Activated CD4-positive, alpha-beta memory T cell treated with anti-CD3 and anti-CD28 coated beads for 36 hours (primary cell): ENCODE measurements at regions of chr17 and their contacts with region 1.

Region 1: DNA sequence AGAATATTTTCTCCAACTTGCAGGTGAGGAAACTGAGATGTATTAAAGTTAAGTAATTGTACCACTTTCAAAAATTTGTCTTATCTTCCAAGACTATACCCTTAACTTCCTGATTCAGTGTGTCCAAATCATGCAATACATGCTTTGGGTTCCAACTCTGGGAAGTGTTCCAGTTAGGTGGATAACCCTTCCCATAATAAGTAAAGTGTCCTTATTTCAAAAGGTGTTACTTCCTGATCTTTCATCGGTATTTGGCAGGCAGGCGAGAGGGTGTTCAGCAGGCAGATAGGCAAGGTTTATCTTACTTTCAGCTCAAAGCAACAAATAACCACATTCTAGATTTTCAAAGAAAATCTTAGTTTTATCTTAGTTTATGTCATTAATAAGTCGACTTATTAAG is 46.3 kb upstream of the ARHGAP44 start:
- DNase-seq: no peak
- H3K4me3 Mint-ChIP-seq: no peak overlapping the region
- H3K27ac Mint-ChIP-seq: no peak overlapping the region
- H3K4me1 Mint-ChIP-seq: no peaks in the 10 kb centered on the region
- H3K27me3 Mint-ChIP-seq: no peaks in the 10 kb centered on the region

Region 2: DNA sequence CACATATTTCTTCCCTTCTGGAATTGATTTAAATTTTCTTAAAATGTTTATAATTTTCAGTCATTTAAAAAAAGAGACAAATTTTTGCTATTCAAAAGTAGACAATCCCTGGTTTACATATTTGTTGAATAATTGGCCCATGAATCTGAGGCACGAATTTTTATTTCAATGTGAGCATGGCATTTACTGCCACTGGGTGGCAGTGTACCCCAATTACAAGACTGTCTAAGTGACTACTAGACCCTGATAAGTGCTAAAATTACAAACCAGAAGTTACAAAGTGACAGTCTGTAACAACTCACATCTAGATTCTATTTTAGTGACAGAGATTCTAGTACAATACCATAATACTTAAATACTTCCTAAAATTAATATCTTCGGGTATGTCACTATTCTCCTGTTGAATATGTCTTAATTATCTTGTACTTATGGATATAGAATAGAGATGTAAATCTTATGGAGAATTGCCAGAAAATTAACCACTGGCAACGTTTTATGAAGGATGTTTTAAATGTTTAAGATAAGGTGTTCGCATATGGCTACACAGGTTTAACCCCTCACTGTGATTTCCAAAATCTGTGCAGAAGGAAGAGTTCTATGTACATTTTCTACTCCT is 486.6 kb before region 1 on chr17:
- CTCF ChIA-PET with region 1: no interaction called
- POLR2A ChIA-PET with region 1: no interaction called
- intact Hi-C with region 1: loop called (anchors 2 kb)
- DNase-seq: peak; percentile 21
- H3K4me3 Mint-ChIP-seq: no peak overlapping the region
- H3K27ac Mint-ChIP-seq: no peak overlapping the region
- H3K4me1 Mint-ChIP-seq: no peaks in the 10 kb centered on the region
- H3K27me3 Mint-ChIP-seq: no peaks in the 10 kb centered on the region